ENCODE measurements at regions of chr6 and their contacts with region 1.

Region 1: GRCh38 chr6:17706580-17707370 is at the start of gene NUP153:
- DNase-seq: peak; percentile 99
- H3K4me3 ChIP-seq: peak within 1 kb of the TSS; percentile 97
- H3K4me3 Mint-ChIP-seq: peak within 1 kb of the TSS; percentile 91
- H3K27ac Mint-ChIP-seq: peak within 1 kb of the TSS; percentile 96
- H3K4me1 ChIP-seq: peaks cover 22% of the 10 kb centered on the region
- H3K4me1 Mint-ChIP-seq: no peaks in the 10 kb centered on the region
- H3K27me3 ChIP-seq: no peaks in the 10 kb centered on the region
- H3K27me3 Mint-ChIP-seq: no peaks in the 10 kb centered on the region
- CTCF ChIP-seq: no peak
- total RNA-seq, gene NUP153: 53.9 and 54.4 TPM in 2 replicates

Region 2: GRCh38 chr6:17381424-17382147 is 325.2 kb before region 1 on chr6:
- CTCF ChIA-PET with region 1: interaction called, 17 read pairs
- POLR2A ChIA-PET with region 1: no interaction called
- intact Hi-C with region 1: no loop called
- DNase-seq: no peak
- H3K4me3 ChIP-seq: no peak overlapping the region
- H3K4me3 Mint-ChIP-seq: no peak overlapping the region
- H3K27ac Mint-ChIP-seq: no peak overlapping the region
- H3K4me1 ChIP-seq: no peaks in the 10 kb centered on the region
- H3K4me1 Mint-ChIP-seq: peaks cover 7% of the 10 kb centered on the region
- H3K27me3 ChIP-seq: no peaks in the 10 kb centered on the region
- H3K27me3 Mint-ChIP-seq: no peaks in the 10 kb centered on the region
- CTCF ChIP-seq: no peak

Region 3: GRCh38 chr6:17666646-17667045 is 40.1 kb before region 1 on chr6:
- CTCF ChIA-PET with region 1: no interaction called
- POLR2A ChIA-PET with region 1: no interaction called
- intact Hi-C with region 1: no loop called
- DNase-seq: no peak
- H3K4me3 ChIP-seq: no peak overlapping the region
- H3K4me3 Mint-ChIP-seq: no peak overlapping the region
- H3K27ac Mint-ChIP-seq: peak overlapping the region; percentile 71
- H3K4me1 ChIP-seq: no peaks in the 10 kb centered on the region
- H3K4me1 Mint-ChIP-seq: no peaks in the 10 kb centered on the region
- H3K27me3 ChIP-seq: no peaks in the 10 kb centered on the region
- H3K27me3 Mint-ChIP-seq: no peaks in the 10 kb centered on the region
- CTCF ChIP-seq: no peak

Region 4: DNA sequence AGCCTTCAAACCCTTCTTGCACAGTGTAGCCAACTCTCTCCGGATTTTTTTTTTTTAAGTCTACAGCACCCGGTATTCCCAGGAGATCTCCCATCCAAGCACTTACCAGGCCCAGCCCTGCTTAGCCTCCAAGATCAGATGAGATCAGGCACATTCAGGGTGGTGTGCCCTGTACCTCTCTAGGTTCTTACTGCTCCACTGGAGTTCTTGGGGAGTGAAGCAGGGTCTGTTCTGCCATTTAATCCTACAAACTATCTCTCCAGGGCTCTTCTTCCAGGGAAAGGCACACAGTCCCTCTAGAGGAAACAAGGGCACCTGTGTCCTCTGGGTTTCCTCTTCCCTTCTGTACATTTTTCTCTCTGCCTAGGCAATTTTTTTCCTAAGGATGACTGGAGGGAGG is 15.0 kb after region 1 on chr6:
- CTCF ChIA-PET with region 1: interaction called, 4 read pairs
- POLR2A ChIA-PET with region 1: interaction called, 6 read pairs
- intact Hi-C with region 1: loop called (anchors 1 kb)
- DNase-seq: no peak
- H3K4me3 ChIP-seq: no peak overlapping the region
- H3K4me3 Mint-ChIP-seq: peak overlapping the region; percentile 71
- H3K27ac Mint-ChIP-seq: peak overlapping the region; percentile 98
- H3K4me1 ChIP-seq: peaks cover 45% of the 10 kb centered on the region
- H3K4me1 Mint-ChIP-seq: peaks cover 18% of the 10 kb centered on the region
- H3K27me3 ChIP-seq: no peaks in the 10 kb centered on the region
- H3K27me3 Mint-ChIP-seq: no peaks in the 10 kb centered on the region
- CTCF ChIP-seq: no peak

Region 5: DNA sequence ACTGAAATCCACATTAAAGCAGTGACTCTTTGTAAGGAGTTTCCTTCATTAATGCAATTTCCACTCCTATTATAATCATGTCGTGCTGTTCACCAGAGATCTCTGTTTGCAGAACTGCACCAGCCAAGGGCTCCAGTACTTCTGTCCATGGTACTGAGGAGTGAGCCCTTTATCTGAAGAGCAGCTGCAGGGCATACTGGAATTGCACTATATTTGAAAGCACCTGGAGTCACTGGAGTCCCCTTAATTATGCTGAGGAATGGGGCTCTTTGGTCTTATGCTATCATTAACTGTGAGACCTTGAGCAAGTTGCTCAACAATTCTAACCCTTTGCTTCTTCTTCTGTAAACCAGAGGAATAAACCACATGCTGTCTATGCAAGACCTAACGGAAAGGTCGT is 61.6 kb after region 1 on chr6:
- CTCF ChIA-PET with region 1: no interaction called
- POLR2A ChIA-PET with region 1: no interaction called
- intact Hi-C with region 1: loop called (anchors 10 kb)
- DNase-seq: peak in 1 of 2 experiments; percentile 47
- H3K4me3 ChIP-seq: no peak overlapping the region
- H3K4me3 Mint-ChIP-seq: no peak overlapping the region
- H3K27ac Mint-ChIP-seq: no peak overlapping the region
- H3K4me1 ChIP-seq: no peaks in the 10 kb centered on the region
- H3K4me1 Mint-ChIP-seq: no peaks in the 10 kb centered on the region
- H3K27me3 ChIP-seq: no peaks in the 10 kb centered on the region
- H3K27me3 Mint-ChIP-seq: no peaks in the 10 kb centered on the region
- CTCF ChIP-seq: no peak

Region 6: DNA sequence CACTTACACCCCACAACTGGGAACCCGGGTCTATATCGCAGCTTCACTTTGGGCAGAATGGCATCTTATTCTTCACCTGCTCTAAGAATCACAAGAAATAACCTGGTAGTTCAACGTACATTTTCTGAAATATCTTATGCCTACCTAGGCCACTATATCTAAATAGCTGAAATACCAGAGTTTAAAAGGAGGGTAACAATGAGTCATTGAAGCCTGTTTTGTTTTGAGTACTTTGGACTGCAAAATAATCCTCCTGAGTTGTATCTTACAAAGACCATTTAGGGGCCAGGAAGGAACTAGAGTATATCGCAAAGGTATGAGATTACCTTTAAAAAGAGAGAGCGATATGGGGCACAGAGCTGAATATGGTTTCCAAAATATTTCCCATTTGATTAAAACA is 96.6 kb after region 1 on chr6:
- CTCF ChIA-PET with region 1: no interaction called
- POLR2A ChIA-PET with region 1: no interaction called
- intact Hi-C with region 1: loop called (anchors 5 kb)
- DNase-seq: no peak
- H3K4me3 ChIP-seq: no peak overlapping the region
- H3K4me3 Mint-ChIP-seq: no peak overlapping the region
- H3K27ac Mint-ChIP-seq: no peak overlapping the region
- H3K4me1 ChIP-seq: peaks cover 13% of the 10 kb centered on the region
- H3K4me1 Mint-ChIP-seq: peaks cover 7% of the 10 kb centered on the region
- H3K27me3 ChIP-seq: no peaks in the 10 kb centered on the region
- H3K27me3 Mint-ChIP-seq: no peaks in the 10 kb centered on the region
- CTCF ChIP-seq: no peak

Region 7: DNA sequence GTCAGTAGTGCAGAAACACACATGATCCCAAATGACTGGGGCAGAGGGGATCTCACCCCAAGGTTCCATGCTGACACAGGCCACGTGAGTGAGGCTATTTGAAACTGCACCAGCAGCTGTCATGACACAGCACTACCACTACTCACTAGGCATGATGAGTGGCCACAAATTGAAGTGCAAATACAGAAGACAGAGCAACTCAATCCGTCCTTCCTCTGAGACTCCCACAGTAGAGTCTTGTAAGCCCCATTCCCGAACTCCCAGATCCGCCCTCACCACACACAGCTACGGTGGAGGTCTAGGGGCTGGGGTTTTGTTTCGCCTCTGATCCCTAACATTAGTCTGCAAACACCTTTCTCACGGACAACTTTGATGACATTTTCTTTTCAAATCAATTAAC is 113.3 kb after region 1 on chr6:
- CTCF ChIA-PET with region 1: interaction called, 3 read pairs
- POLR2A ChIA-PET with region 1: no interaction called
- intact Hi-C with region 1: loop called (anchors 1 kb)
- DNase-seq: peak in 1 of 2 experiments; percentile 9
- H3K4me3 ChIP-seq: no peak overlapping the region
- H3K4me3 Mint-ChIP-seq: no peak overlapping the region
- H3K27ac Mint-ChIP-seq: no peak overlapping the region
- H3K4me1 ChIP-seq: peaks cover 17% of the 10 kb centered on the region
- H3K4me1 Mint-ChIP-seq: peaks cover 14% of the 10 kb centered on the region
- H3K27me3 ChIP-seq: no peaks in the 10 kb centered on the region
- H3K27me3 Mint-ChIP-seq: no peaks in the 10 kb centered on the region
- CTCF ChIP-seq: peak in 1 of 2 experiments; percentile 5

Region 8: GRCh38 chr6:17865798-17866725 is 159.3 kb after region 1 on chr6:
- CTCF ChIA-PET with region 1: no interaction called
- POLR2A ChIA-PET with region 1: no interaction called
- intact Hi-C with region 1: no loop called
- DNase-seq: peak in 1 of 2 experiments; percentile 35
- H3K4me3 ChIP-seq: no peak overlapping the region
- H3K4me3 Mint-ChIP-seq: no peak overlapping the region
- H3K27ac Mint-ChIP-seq: peak overlapping the region; percentile 12
- H3K4me1 ChIP-seq: peaks cover 10% of the 10 kb centered on the region; the same call in 1 of the 2 replicates
- H3K4me1 Mint-ChIP-seq: peaks cover 5% of the 10 kb centered on the region
- H3K27me3 ChIP-seq: no peaks in the 10 kb centered on the region
- H3K27me3 Mint-ChIP-seq: no peaks in the 10 kb centered on the region
- CTCF ChIP-seq: no peak

Measured in Caco-2 (cell line).